CD8-positive, alpha-beta T cell (primary cell): ENCODE measurements at regions of chr1 and their contacts with region 1.

Region 1: DNA sequence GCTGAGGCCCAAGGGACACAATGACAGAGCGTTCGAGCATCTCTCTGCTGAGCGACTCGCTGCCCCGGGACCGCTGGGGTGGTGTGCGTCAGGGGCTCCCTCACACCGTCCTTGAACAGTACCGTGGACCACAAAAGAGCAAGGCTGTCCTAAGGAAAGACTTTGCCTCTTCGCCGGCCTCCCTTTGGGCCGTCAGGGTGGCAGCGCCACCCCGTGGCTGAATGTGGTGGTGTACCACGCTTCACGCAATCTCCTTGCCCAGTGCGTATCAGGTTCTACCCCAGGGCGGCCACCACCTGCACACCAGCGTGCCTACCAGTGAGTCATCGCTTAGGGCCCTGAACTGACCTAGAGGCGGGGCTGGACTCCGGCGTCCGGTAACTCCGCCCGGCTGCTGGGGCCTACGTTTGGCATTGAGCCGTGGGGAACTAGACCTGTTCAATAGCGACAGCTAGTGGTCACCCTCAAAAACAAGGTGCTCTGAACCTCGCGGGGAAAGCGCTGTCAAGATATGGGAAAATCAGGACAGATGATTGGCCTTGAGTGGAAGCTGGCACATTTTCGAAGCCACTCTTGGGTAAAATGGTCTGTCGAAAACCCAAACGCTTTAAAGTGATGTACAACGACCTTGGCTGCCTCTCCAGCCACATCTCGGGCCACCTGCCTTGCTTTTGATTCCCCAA is 8.1 kb upstream of the TRAF3IP3 start:
- DNase-seq: peak; percentile 65 to 93 (median 83)
- ATAC-seq: peak; percentile 84
- H3K4me3 ChIP-seq: peak overlapping the region; percentile 46 to 56
- H3K4me3 Mint-ChIP-seq: peak overlapping the region; percentile 93
- H3K27ac ChIP-seq: peak overlapping the region; percentile 54 to 67
- H3K27ac Mint-ChIP-seq: peak overlapping the region; percentile 97
- H3K4me1 ChIP-seq: peaks cover 46% of the 10 kb centered on the region
- H3K4me1 Mint-ChIP-seq: peaks cover 52% of the 10 kb centered on the region
- H3K27me3 ChIP-seq: no peaks in the 10 kb centered on the region
- H3K27me3 Mint-ChIP-seq: no peaks in the 10 kb centered on the region
- CTCF ChIP-seq: peak; percentile 97

Region 2: DNA sequence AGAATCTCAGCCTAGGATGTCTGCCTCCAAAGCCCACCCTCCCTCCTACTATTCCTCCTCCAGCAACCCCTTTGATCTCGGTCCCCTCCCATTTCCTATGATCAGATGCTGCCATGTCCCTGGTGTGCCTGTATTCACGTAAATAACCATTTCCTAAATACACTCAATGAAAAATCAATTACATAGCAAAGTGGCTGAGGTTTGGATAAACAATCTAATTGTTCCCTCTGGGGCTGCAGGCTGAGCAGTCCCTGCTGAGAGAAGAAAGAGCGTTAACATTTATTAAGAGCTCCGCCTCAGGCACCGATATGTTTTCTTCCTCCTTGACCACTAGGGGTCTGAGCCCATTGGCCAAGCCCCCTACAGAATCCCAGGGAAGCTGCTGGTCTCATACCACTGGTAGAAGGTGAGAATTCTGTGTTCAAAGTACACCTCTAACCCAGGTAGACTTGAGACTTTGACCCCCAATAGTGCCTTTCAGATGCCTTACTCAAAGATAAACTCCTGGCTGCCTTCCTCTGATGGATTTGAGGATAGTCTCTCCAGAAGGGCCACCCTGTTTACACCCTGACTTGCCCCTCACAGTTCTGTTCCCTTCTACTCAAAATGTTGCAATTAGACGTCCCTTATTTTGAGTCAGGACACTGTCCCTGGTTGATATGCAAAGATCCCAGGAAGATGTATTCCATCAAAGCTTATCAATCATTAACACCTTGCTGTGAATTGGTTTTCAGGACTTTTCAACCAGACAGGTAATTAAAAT is 198.1 kb before region 1 on chr1:
- CTCF ChIA-PET with region 1: no interaction called
- POLR2A ChIA-PET with region 1: no interaction called
- intact Hi-C with region 1: no loop called
- DNase-seq: no peak
- ATAC-seq: no peak
- H3K4me3 ChIP-seq: no peak overlapping the region
- H3K4me3 Mint-ChIP-seq: no peak overlapping the region
- H3K27ac ChIP-seq: no peak overlapping the region
- H3K27ac Mint-ChIP-seq: no peak overlapping the region
- H3K4me1 ChIP-seq: no peaks in the 10 kb centered on the region
- H3K4me1 Mint-ChIP-seq: peaks cover 2% of the 10 kb centered on the region
- H3K27me3 ChIP-seq: no peaks in the 10 kb centered on the region
- H3K27me3 Mint-ChIP-seq: peaks cover 16% of the 10 kb centered on the region
- CTCF ChIP-seq: no peak

Region 3: DNA sequence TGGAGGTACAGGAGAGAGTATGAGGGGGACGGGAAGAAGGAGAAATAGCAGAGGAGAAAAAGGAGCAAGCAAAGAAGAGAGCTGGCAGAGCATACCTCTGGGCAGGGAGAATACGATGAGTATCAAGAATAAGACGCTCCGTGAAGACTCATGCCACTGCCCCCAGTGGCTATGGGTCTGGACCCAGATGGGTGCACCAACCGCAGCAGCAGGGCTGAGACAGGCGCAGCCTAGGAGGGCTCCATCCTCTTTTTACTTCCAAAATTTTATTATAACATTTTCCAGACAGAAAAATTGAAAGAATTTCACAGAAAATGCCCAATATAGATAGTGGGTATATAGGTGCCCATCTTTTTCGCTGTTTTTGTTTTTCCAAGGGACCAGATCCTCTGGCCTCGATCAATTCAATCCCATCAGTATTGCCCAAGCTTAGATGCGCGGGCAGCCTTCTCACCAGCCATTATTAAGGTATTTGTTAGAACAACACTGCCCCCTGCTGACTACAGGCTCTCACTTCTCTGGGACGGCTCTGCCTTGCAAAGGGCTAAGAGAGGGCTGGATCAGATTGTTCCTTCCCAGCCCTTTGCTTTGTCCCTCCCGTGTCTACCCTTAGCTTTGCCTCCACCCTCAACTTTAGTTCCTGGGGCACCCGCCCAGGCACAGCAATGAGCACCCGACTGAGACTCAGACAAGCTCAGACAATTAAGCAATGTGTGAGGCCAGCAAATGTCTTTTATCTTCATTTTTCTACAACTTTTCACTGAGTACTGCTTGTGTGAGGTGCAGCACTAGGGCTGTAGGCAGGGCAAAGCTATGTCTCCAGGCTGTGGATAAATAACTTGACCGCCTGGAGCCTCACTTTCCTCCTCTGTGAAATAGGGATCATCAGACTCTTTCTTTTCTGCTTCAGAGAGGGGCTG is 181.7 kb before region 1 on chr1:
- CTCF ChIA-PET with region 1: interaction called, 8 read pairs
- POLR2A ChIA-PET with region 1: no interaction called
- intact Hi-C with region 1: loop called in 1 of 2 experiments (anchors 1 kb)
- DNase-seq: peak; percentile 38 to 78 (median 72)
- ATAC-seq: peak; percentile 74
- H3K4me3 ChIP-seq: no peak overlapping the region
- H3K4me3 Mint-ChIP-seq: no peak overlapping the region
- H3K27ac ChIP-seq: no peak overlapping the region
- H3K27ac Mint-ChIP-seq: no peak overlapping the region
- H3K4me1 ChIP-seq: no peaks in the 10 kb centered on the region
- H3K4me1 Mint-ChIP-seq: peaks cover 6% of the 10 kb centered on the region
- H3K27me3 ChIP-seq: peaks cover 0 to 3% of the 10 kb centered on the region in 2 experiments
- H3K27me3 Mint-ChIP-seq: peaks cover 33% of the 10 kb centered on the region
- CTCF ChIP-seq: peak; percentile 70

Region 4: GRCh38 chr1:209601809-209602657 is 145.7 kb before region 1 on chr1:
- CTCF ChIA-PET with region 1: interaction called, 9 read pairs
- POLR2A ChIA-PET with region 1: no interaction called
- intact Hi-C with region 1: loop called in 1 of 2 experiments (anchors 1 kb)
- DNase-seq: peak in 2 of 9 experiments; percentile 38 to 45
- ATAC-seq: peak; percentile 44
- H3K4me3 ChIP-seq: no peak overlapping the region
- H3K4me3 Mint-ChIP-seq: no peak overlapping the region
- H3K27ac ChIP-seq: no peak overlapping the region
- H3K27ac Mint-ChIP-seq: no peak overlapping the region
- H3K4me1 ChIP-seq: no peaks in the 10 kb centered on the region
- H3K4me1 Mint-ChIP-seq: no peaks in the 10 kb centered on the region
- H3K27me3 ChIP-seq: no peaks in the 10 kb centered on the region
- H3K27me3 Mint-ChIP-seq: peaks cover 12% of the 10 kb centered on the region
- CTCF ChIP-seq: no peak

Region 5: DNA sequence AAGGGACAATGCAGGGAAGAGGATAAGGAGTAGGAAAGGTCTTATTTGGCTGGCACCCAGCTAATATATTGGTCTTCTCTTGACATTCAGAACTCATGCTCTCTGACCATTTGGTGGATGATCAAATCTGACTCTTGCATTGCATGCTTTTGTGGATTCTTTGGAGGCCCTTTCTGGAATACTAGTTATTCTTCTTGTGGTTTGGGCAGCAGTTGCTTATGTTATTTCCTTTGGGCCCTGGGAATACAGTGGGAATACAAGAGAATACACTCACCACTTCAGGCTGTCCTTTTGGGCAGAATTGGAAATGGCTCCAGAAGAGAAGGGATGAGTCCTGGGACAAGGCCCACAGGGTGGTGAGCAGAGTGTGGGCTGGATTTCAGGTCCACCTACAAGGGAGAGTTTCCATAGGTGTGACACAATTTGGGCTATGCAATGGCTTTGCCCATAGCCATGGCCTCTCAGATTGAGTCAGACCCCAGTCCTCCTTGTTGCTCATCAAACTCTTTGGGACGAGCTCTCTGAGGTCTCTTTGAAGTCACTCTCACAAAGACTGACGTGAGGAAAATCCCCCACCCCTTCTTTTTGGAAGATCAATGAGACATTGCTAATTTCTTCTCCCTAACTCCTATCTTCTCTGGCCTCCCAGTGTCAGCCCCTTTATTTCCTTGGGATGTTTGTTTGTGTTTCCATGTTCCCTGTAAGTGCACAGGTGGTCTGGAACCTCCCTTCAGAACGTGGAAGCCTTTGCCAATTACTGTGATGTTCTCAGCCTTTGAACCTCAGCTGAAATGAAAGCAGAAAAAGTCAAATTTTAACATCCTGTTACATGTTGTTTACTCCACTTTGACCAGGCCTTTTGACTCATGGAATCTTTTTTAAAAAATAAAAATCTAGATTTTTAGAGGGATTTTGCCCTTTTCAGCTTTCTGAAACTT is 23.7 kb before region 1 on chr1:
- CTCF ChIA-PET with region 1: interaction called, 22 read pairs
- POLR2A ChIA-PET with region 1: no interaction called
- intact Hi-C with region 1: loop called in 1 of 2 experiments (anchors 2 kb)
- DNase-seq: peak in 2 of 9 experiments; percentile 8 to 54
- ATAC-seq: no peak
- H3K4me3 ChIP-seq: no peak overlapping the region
- H3K4me3 Mint-ChIP-seq: peak overlapping the region; percentile 35
- H3K27ac ChIP-seq: peak overlapping the region in 1 of 2 experiments; percentile 41
- H3K27ac Mint-ChIP-seq: peak overlapping the region; percentile 88
- H3K4me1 ChIP-seq: peaks cover 20% of the 10 kb centered on the region
- H3K4me1 Mint-ChIP-seq: peaks cover 19% of the 10 kb centered on the region
- H3K27me3 ChIP-seq: no peaks in the 10 kb centered on the region
- H3K27me3 Mint-ChIP-seq: no peaks in the 10 kb centered on the region
- CTCF ChIP-seq: no peak

Region 6: GRCh38 chr1:209769171-209769904 is 21.6 kb after region 1 on chr1:
- CTCF ChIA-PET with region 1: interaction called, 88 read pairs
- POLR2A ChIA-PET with region 1: interaction called, 377 read pairs
- intact Hi-C with region 1: loop called (anchors 1 kb)
- DNase-seq: peak; percentile 33 to 87 (median 76)
- ATAC-seq: peak; percentile 72
- H3K4me3 ChIP-seq: peak overlapping the region; percentile 72 to 88
- H3K4me3 Mint-ChIP-seq: no peak overlapping the region
- H3K27ac ChIP-seq: peak overlapping the region; percentile 75 to 76
- H3K27ac Mint-ChIP-seq: no peak overlapping the region
- H3K4me1 ChIP-seq: peaks cover 68% of the 10 kb centered on the region
- H3K4me1 Mint-ChIP-seq: peaks cover 44% of the 10 kb centered on the region
- H3K27me3 ChIP-seq: no peaks in the 10 kb centered on the region
- H3K27me3 Mint-ChIP-seq: no peaks in the 10 kb centered on the region
- CTCF ChIP-seq: no peak

Region 7: DNA sequence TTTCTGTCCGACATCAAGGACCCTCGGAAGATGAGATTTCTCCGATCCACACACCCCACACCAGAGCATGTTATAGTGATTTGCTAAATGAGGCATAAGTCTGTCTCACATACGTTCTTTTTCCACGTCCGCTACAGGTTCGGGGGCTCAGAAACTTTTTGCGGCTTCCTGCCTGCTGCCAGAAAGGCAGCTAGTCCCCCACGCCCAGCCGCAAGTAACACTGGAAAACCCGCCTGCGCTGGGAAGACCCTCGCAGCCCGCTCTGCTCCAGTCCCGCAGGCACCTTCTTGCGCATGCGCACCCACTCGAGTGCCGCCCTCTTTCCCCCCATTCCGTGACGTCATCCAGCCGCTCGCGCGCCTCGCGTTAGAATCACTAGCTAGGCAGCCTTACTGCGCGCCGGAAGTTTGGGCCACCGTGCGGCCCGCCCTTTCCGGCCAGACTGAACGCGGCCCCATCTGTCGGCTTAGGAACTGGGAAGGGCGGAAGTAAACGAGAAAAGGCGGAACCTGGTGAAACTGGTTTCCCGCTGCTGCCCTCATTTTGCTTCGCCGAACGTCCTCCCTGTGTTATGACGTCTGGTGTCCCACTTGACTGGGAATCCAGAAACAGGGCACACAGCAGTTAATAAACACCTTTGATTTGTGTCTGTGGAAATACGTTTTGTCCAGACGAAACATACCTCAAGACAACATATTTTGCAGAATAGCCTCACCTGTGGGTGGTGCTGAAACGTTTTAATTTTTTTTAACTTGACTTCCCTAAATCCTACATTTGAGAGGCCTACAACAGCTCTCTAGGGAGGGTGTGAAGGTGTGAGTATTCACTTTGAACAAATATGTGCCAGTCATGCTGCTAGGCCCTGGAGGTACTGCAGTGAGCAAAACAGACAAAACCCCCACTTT is 36.8 kb after region 1 on chr1 and contains the start of gene C1orf74:
- CTCF ChIA-PET with region 1: interaction called, 13 read pairs
- POLR2A ChIA-PET with region 1: interaction called, 377 read pairs
- intact Hi-C with region 1: loop called (anchors 1 to 5 kb)
- DNase-seq: peak; percentile 98 to 100 (median 99)
- ATAC-seq: peak; percentile 95
- H3K4me3 ChIP-seq: peak within 1 kb of the TSS; percentile 64 to 70
- H3K4me3 Mint-ChIP-seq: peak within 1 kb of the TSS; percentile 92
- H3K27ac ChIP-seq: peak within 1 kb of the TSS; percentile 85 to 95
- H3K27ac Mint-ChIP-seq: peak within 1 kb of the TSS; percentile 98
- H3K4me1 ChIP-seq: peaks cover 17% of the 10 kb centered on the region
- H3K4me1 Mint-ChIP-seq: peaks cover 32% of the 10 kb centered on the region
- H3K27me3 ChIP-seq: no peaks in the 10 kb centered on the region
- H3K27me3 Mint-ChIP-seq: no peaks in the 10 kb centered on the region
- CTCF ChIP-seq: no peak
- total RNA-seq, gene C1orf74: 0.71 to 0.75 TPM